IMR-90 (cell line): ENCODE measurements at regions of chr19 and their contacts with region 1.

Region 1: DNA sequence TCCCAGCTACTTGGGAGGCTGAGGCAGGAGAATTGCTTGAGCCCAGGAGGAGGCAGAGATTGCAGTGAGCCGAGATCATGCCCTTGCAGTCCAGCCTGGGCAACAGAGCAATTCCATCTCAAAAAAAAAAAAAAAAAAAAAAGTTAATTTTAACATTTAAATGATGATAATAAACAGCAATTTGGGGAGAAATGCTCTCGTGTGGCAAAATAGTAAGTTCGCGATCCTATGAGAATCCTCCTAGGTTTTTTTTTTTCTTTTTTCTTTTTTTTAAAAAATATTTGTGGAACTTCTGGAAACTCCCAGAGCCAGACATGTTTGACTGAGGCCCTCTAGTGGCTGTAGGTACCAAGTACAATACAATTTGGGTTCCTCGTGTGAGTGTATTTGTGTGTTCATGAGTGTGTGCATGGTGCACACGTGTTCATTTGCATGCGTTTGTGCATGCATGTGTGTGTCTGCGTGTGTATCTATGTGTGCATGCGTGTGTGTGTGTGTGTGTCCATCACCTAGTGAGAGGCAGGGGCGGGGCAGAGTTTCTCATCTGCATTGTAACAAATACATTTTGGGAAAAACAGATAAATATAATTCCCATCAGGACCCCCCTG is 31.2 kb downstream of the TMPRSS9 start:
- DNase-seq: peak; percentile 78
- ATAC-seq: peak; percentile 85
- H3K4me3 ChIP-seq: no peak overlapping the region
- H3K27ac ChIP-seq: no peak overlapping the region
- H3K4me1 ChIP-seq: no peaks in the 10 kb centered on the region
- H3K27me3 ChIP-seq: peaks cover 7% of the 10 kb centered on the region
- CTCF ChIP-seq: peak; percentile 78
- POLR2A ChIP-seq: no peak
- RAD21 ChIP-seq: peak; percentile 77

Region 2: DNA sequence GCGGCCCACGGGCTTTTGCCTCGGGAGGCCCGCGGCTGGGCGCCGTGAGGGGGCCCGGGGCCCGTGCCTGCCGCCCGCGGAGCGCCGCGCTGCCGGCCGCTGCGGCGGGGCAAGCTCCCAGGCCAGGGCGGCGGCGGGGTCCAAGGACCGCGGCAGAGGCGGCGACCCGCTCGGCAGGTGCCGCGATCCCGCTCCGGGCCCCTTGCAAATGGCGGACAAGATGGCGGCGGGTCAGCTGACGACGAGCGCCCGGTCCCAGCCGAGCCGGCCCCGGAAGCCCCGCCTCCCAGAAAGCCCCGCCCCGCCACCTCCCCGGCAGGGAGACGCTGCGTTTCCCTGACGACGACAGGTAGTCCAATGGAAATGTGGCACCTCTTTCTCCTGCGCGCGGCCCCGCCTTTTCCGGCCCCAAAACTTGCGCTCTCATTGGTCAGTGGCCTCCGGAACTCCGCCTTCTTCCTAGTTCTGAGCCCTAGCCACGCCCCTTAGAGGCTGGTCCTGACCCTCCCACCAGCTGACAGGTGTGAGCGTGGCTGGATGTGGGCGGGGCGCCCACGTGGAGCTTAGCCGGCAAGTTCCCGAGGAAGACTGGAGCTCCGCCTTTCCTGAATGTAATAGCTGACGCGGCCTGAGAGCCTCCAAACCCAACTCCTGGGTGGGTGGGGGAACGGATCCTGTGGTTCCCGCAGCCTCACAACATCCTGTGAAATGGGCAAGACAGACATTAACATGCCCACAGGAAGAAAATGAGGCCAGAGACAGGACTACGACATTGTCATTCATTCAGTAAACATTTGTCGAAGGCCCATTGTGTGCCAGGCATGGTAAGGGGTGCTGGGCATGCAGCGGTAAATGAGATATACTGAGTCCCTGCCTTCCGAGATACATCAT is 239.6 kb before region 1 on chr19 and contains the start of gene AP3D1:
- CTCF ChIA-PET with region 1: no interaction called
- POLR2A ChIA-PET with region 1: no interaction called
- dilution Hi-C with region 1: no loop called
- in situ Hi-C with region 1: loop called (anchors 10 kb)
- intact Hi-C with region 1: loop called (anchors 2 kb)
- DNase-seq: peak; percentile 100
- ATAC-seq: peak; percentile 95
- H3K4me3 ChIP-seq: peak within 1 kb of the TSS; percentile 99
- H3K27ac ChIP-seq: peak within 1 kb of the TSS; percentile 97
- H3K4me1 ChIP-seq: peaks cover 10% of the 10 kb centered on the region
- H3K27me3 ChIP-seq: no peaks in the 10 kb centered on the region
- CTCF ChIP-seq: no peak
- POLR2A ChIP-seq: peak; percentile 52; the same call in 1 of the 2 replicates
- RAD21 ChIP-seq: no peak
- total RNA-seq, gene AP3D1: 75.3 and 76.1 TPM in 2 replicates

Region 3: GRCh38 chr19:2157452-2157851 is 233.8 kb before region 1 on chr19:
- CTCF ChIA-PET with region 1: no interaction called
- POLR2A ChIA-PET with region 1: no interaction called
- dilution Hi-C with region 1: no loop called
- in situ Hi-C with region 1: loop called (anchors 10 kb)
- intact Hi-C with region 1: loop called (anchors 2 kb)
- DNase-seq: no peak
- ATAC-seq: no peak
- H3K4me3 ChIP-seq: no peak overlapping the region
- H3K27ac ChIP-seq: no peak overlapping the region
- H3K4me1 ChIP-seq: peaks cover 1% of the 10 kb centered on the region; the same call in 1 of the 2 replicates
- H3K27me3 ChIP-seq: no peaks in the 10 kb centered on the region
- CTCF ChIP-seq: no peak
- POLR2A ChIP-seq: no peak
- RAD21 ChIP-seq: no peak

Region 4: GRCh38 chr19:2273356-2274184 is 117.7 kb before region 1 on chr19:
- CTCF ChIA-PET with region 1: no interaction called
- POLR2A ChIA-PET with region 1: no interaction called
- dilution Hi-C with region 1: no loop called
- in situ Hi-C with region 1: no loop called
- intact Hi-C with region 1: loop called (anchors 1 kb)
- DNase-seq: peak; percentile 52
- ATAC-seq: peak; percentile 5
- H3K4me3 ChIP-seq: no peak overlapping the region
- H3K27ac ChIP-seq: peak overlapping the region; percentile 16; the same call in 1 of the 2 replicates
- H3K4me1 ChIP-seq: peaks cover 14% of the 10 kb centered on the region
- H3K27me3 ChIP-seq: no peaks in the 10 kb centered on the region
- CTCF ChIP-seq: peak; percentile 88
- POLR2A ChIP-seq: no peak
- RAD21 ChIP-seq: peak; percentile 60

Region 5: DNA sequence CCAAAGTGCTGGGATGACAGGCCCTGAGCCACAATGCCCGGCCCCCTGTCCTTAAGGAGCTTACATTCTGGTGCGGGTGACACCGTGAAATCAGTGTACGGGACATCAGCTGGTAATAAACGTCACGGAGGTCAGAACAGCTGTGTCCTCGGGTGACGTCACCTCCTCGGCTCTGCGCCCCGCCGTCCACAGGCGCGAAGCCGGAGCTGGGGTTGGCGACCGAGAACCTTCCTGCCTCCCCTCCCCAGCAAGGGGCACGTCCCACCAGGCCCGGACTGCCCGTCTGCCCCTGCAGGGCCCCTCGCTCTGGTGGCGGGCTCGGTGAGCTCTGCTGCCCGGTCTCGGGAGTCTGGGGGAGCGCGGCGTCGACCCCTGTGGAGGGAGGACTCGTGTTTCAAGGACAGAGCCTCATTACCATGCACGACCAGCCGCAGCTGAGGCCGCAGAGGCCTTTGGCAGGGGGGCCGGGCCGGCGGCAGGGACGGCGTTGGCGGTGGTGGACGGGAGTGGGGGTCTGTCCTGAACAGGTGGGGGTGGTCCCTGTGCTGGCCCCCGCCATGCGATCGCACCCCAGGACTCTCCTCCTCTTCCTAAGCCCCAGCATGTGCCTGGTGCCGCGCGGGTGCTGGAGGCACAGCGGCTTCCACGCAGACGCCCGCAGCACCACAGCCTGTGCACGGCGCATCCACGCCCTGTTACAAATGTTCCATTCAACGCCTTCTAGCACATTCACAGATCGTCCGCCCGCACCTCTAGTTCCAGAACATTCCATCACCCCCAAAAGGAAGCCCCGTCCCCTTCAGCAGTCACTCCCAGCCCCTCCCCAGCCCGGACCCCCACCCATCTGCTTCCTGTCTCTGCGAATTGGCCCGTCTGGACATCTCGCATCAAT is 88.7 kb before region 1 on chr19:
- CTCF ChIA-PET with region 1: no interaction called
- POLR2A ChIA-PET with region 1: no interaction called
- dilution Hi-C with region 1: no loop called
- in situ Hi-C with region 1: no loop called
- intact Hi-C with region 1: no loop called
- DNase-seq: peak; percentile 65
- ATAC-seq: peak; percentile 54
- H3K4me3 ChIP-seq: no peak overlapping the region
- H3K27ac ChIP-seq: no peak overlapping the region
- H3K4me1 ChIP-seq: peaks cover 2% of the 10 kb centered on the region; the same call in 1 of the 2 replicates
- H3K27me3 ChIP-seq: peaks cover 40% of the 10 kb centered on the region
- CTCF ChIP-seq: no peak
- POLR2A ChIP-seq: no peak
- RAD21 ChIP-seq: no peak

Region 6: GRCh38 chr19:2328401-2329148 is 62.6 kb before region 1 on chr19 and contains the starts of genes LSM7 and SPPL2B:
- CTCF ChIA-PET with region 1: no interaction called
- POLR2A ChIA-PET with region 1: no interaction called
- dilution Hi-C with region 1: no loop called
- in situ Hi-C with region 1: no loop called
- intact Hi-C with region 1: loop called (anchors 5 kb)
- DNase-seq: peak; percentile 83
- ATAC-seq: peak; percentile 86
- H3K4me3 ChIP-seq: peak within 1 kb of the TSS; percentile 94
- H3K27ac ChIP-seq: peak within 1 kb of the TSS; percentile 92
- H3K4me1 ChIP-seq: peaks cover 4% of the 10 kb centered on the region
- H3K27me3 ChIP-seq: no peaks in the 10 kb centered on the region
- CTCF ChIP-seq: no peak
- POLR2A ChIP-seq: peak; percentile 69; the same call in 1 of the 2 replicates
- RAD21 ChIP-seq: no peak
- total RNA-seq, gene LSM7: 145 and 200 TPM in 2 replicates
- total RNA-seq, gene SPPL2B: 3.4 and 4.2 TPM in 2 replicates